Pancreas (tissue), 10 donors: ENCODE measurements at regions of chr1 and their contacts with region 1.

Region 1: DNA sequence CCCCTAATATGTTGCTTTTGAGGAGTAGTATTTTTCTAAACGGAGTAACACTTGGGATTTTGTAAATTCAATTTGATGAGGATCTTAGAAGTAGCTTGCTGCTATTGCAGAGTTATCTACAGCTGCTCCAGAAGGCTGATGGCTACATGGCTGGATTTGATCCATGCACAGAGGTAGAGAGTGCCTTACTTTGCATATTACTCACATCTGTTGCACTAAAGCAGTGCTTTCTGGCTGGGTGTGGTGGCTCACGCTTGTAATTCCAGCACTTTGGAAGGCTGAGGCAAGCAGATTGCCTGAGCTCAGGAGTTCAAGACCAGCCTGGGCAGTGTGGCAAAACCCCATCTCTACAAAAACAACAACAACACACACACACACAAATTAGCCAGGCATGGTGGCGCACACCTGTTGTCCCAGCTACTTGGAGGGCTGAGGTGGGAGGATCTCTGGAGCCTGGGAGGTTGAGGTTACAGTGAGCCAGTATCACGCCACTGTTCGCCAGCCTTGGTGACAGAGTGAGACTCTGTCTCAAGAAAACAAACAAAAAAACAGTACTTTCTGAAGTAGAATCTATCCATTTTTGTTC is 24.6 kb downstream of the RALGPS2 start:
- DNase-seq: no peak
- ATAC-seq: no peak
- H3K4me3 ChIP-seq: no peak overlapping the region
- H3K27ac ChIP-seq: no peak overlapping the region
- H3K4me1 ChIP-seq: peaks cover 0 to 4% (median 0%) of the 10 kb centered on the region in 3 donors
- H3K27me3 ChIP-seq: no peaks in the 10 kb centered on the region
- CTCF ChIP-seq: no peak

Region 2: DNA sequence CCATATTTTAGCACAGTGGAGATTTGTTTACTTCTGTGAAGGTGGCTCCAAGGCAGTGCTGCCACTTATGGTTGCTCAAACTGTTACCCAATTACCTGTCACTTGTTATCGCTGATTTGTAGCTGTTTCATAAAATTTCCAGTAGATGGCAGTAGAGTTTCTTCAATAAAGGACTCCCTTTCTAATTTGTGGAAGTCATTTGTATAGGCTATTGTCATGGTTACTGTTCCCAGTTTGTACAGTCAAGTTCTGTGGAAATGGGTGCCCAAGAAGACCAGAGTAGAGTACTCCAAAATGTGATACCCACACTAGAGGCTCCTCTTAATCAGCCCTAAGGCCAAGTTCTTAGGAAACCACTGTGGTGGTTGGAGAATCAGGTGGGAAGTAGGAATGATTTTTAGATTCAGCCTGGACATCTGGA is 439.0 kb before region 1 on chr1:
- intact Hi-C with region 1: loop called in 1 of 3 experiments (anchors 10 kb)
- DNase-seq: peak in 2 of 6 donors; percentile 6 to 32
- ATAC-seq: peak; percentile 93 to 99 (median 94)
- H3K4me3 ChIP-seq: no peak overlapping the region
- H3K27ac ChIP-seq: no peak overlapping the region
- H3K4me1 ChIP-seq: peaks cover 0 to 7% (median 0%) of the 10 kb centered on the region in 3 donors
- H3K27me3 ChIP-seq: no peaks in the 10 kb centered on the region
- CTCF ChIP-seq: peak; percentile 45 to 72 (median 57)

Region 3: DNA sequence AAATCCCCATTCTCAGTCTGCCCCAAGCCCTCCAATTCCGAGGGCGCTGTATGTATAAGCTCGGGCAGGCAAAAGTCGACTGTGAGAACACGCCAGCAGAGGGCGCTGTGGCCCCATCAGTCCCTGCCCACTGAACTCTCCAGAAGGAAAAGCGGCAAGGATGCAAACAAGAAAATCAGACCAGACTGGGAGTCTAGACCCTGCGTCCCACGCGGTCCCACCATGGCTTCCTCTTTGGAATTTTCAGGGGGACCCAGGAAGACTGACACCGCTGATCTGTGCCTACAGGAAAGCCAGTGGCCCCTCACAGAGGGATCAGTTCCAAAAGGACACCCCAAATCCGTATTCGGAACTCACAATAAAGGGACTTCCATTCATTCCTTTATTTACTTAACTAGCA is 217.3 kb before region 1 on chr1:
- intact Hi-C with region 1: loop called in 1 of 3 experiments (anchors 10 kb)
- DNase-seq: peak; percentile 62 to 95 (median 86)
- ATAC-seq: peak; percentile 69 to 89 (median 85)
- H3K4me3 ChIP-seq: no peak overlapping the region
- H3K27ac ChIP-seq: no peak overlapping the region
- H3K4me1 ChIP-seq: no peaks in the 10 kb centered on the region
- H3K27me3 ChIP-seq: no peaks in the 10 kb centered on the region
- CTCF ChIP-seq: peak; percentile 79 to 90 (median 87)

Region 4: DNA sequence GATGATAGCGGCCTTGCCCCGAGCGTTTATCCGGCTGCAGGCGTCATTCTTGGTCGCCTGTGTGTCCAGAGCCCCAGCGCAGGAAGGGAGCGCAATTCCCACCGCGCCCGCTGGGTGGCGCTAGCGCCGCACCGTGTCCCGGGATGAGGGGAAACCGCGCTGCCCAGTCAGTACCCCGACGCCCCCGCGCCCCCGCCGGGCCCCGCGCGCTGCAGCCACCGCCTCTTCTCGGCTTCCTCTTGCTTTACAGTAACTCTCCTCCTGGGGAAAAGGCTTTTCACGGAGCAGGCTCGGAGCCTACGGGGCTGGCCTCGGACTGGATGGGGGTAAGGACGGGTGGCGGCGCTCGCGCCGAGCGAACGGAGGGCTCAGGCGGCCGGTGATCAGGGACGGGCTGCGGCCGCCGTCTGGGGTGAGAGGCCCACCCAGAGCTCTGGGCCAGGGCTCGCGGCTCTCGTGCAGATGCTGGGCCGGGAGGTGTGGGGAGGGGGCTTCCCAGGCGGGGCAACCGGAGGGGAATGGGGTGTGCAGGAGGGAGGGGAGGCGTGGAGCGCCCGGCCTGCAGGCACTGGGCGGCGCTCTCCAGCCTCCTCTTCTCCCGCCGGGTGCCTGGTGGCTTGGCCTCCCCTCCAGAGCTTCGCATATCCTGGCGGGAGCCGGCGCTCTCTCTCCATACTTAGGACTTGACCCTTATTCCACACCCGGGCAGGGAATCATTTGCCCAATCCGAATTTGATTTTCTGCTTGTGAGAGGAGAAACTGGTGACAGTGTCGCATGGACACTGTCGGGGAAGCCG is 206.9 kb before region 1 on chr1:
- intact Hi-C with region 1: loop called in 2 of 3 experiments (anchors 5 to 10 kb)
- DNase-seq: peak; percentile 76 to 99 (median 90)
- ATAC-seq: peak; percentile 92 to 97 (median 93)
- H3K4me3 ChIP-seq: peak overlapping the region; percentile 60 to 86 (median 72)
- H3K27ac ChIP-seq: peak overlapping the region; percentile 44 to 84 (median 67)
- H3K4me1 ChIP-seq: no peaks in the 10 kb centered on the region
- H3K27me3 ChIP-seq: no peaks in the 10 kb centered on the region
- CTCF ChIP-seq: peak; percentile 99 to 100 (median 100)

Region 5: DNA sequence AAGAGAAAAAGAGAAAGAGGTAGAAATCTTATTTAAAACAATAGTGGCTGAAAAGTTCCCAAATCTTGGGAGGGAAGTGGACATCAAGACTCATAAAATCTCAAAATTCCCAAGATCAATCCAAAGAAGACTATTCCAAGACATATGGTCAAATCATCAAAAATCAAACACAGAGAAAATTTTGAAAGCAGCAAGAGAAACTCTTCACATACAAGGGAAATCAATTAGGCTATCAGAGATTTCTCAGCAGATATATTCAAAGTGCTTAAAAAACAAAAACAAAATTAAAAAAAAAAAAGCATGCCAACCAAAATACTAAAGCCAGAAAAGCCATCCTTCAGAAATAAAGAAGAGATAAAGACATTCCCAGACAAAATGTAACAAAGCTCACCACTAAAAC is 77.2 kb before region 1 on chr1:
- intact Hi-C with region 1: no loop called
- DNase-seq: no peak
- ATAC-seq: no peak
- H3K4me3 ChIP-seq: no peak overlapping the region
- H3K27ac ChIP-seq: no peak overlapping the region
- H3K4me1 ChIP-seq: no peaks in the 10 kb centered on the region
- H3K27me3 ChIP-seq: no peaks in the 10 kb centered on the region
- CTCF ChIP-seq: no peak

Region 6: GRCh38 chr1:178942285-178943198 is 192.9 kb after region 1 on chr1:
- intact Hi-C with region 1: no loop called
- DNase-seq: no peak
- ATAC-seq: no peak
- H3K4me3 ChIP-seq: no peak overlapping the region
- H3K27ac ChIP-seq: no peak overlapping the region
- H3K4me1 ChIP-seq: no peaks in the 10 kb centered on the region
- H3K27me3 ChIP-seq: no peaks in the 10 kb centered on the region
- CTCF ChIP-seq: no peak